GM12878 (cell line): ENCODE measurements at regions of chr6 and their contacts with region 1.

Region 1: GRCh38 chr6:21593412-21593926 is at the start of gene SOX4:
- DNase-seq: peak; percentile 88
- ATAC-seq: peak; percentile 73
- H3K4me3 ChIP-seq: peak within 1 kb of the TSS; percentile 88
- H3K27ac ChIP-seq: peak within 1 kb of the TSS; percentile 81
- H3K4me1 ChIP-seq: no peaks in the 10 kb centered on the region
- H3K27me3 ChIP-seq: no peaks in the 10 kb centered on the region
- CTCF ChIP-seq: no peak
- EP300 ChIP-seq: no peak
- POLR2A ChIP-seq: peak; percentile 99
- RAD21 ChIP-seq: 0 out of 2 replicates have a peak, but pooled peaks have one; percentile 1
- polyA plus RNA-seq, gene SOX4: 46.3 to 119 TPM

Region 2: DNA sequence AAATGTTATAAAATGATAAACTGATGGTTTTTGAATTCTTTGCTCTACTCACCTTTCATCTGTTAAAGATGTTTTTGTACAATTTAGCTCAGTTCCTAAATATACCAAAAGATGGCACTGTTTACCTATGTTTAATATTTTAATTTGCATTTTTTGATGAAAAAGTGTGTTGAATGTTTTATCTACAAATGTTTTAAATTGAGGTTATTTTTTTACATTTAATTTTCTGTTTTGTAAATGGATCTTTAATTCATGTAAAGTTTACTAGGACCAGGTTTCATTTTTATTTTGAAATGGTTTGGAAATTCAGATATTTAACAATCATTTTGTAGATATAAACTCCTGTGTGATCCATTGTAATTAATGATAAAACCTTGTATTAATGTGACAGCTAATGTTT is 1029.2 kb before region 1 on chr6:
- CTCF ChIA-PET with region 1: interaction called, 137 read pairs
- POLR2A ChIA-PET with region 1: interaction called, 6 read pairs
- RAD21 ChIA-PET with region 1: interaction called, 83 read pairs
- SMC1A ChIA-PET with region 1: interaction called, 62 read pairs
- in situ Hi-C with region 1: loop called (anchors 5 kb)
- intact Hi-C with region 1: loop called (anchors 1 kb)
- DNase-seq: no peak
- ATAC-seq: peak; percentile 39; the same call in 2 of the 3 replicates
- H3K4me3 ChIP-seq: no peak overlapping the region
- H3K27ac ChIP-seq: peak overlapping the region; percentile 61
- H3K4me1 ChIP-seq: peaks cover 5% of the 10 kb centered on the region
- H3K27me3 ChIP-seq: no peaks in the 10 kb centered on the region
- CTCF ChIP-seq: peak in 2 of 3 experiments; percentile 34 to 44; a peak in 4 of 6 replicates
- EP300 ChIP-seq: no peak
- POLR2A ChIP-seq: no peak
- RAD21 ChIP-seq: peak; percentile 36; the same call in 1 of the 2 replicates

Region 3: GRCh38 chr6:21003780-21004541 is 589.5 kb before region 1 on chr6:
- CTCF ChIA-PET with region 1: interaction called, 4 read pairs
- POLR2A ChIA-PET with region 1: interaction called, 4 read pairs
- RAD21 ChIA-PET with region 1: interaction called, 10 read pairs
- SMC1A ChIA-PET with region 1: no interaction called
- in situ Hi-C with region 1: no loop called
- intact Hi-C with region 1: loop called (anchors 5 kb)
- DNase-seq: peak; percentile 72
- ATAC-seq: peak; percentile 89
- H3K4me3 ChIP-seq: peak overlapping the region; percentile 32; the same call in 1 of the 2 replicates
- H3K27ac ChIP-seq: peak overlapping the region; percentile 83
- H3K4me1 ChIP-seq: peaks cover 20% of the 10 kb centered on the region
- H3K27me3 ChIP-seq: no peaks in the 10 kb centered on the region
- CTCF ChIP-seq: no peak
- EP300 ChIP-seq: peak in 1 of 2 experiments; percentile 72; a peak in 3 of 4 replicates
- POLR2A ChIP-seq: no peak
- RAD21 ChIP-seq: no peak

Region 4: GRCh38 chr6:21188505-21189223 is 404.8 kb before region 1 on chr6:
- CTCF ChIA-PET with region 1: no interaction called
- POLR2A ChIA-PET with region 1: interaction called, 6 read pairs
- RAD21 ChIA-PET with region 1: interaction called, 3 read pairs
- SMC1A ChIA-PET with region 1: no interaction called
- in situ Hi-C with region 1: loop called (anchors 25 kb)
- intact Hi-C with region 1: loop called (anchors 10 kb)
- DNase-seq: peak; percentile 82
- ATAC-seq: peak; percentile 77
- H3K4me3 ChIP-seq: no peak overlapping the region
- H3K27ac ChIP-seq: peak overlapping the region; percentile 77
- H3K4me1 ChIP-seq: peaks cover 19% of the 10 kb centered on the region
- H3K27me3 ChIP-seq: no peaks in the 10 kb centered on the region
- CTCF ChIP-seq: no peak
- EP300 ChIP-seq: no peak
- POLR2A ChIP-seq: no peak
- RAD21 ChIP-seq: no peak

Region 5: DNA sequence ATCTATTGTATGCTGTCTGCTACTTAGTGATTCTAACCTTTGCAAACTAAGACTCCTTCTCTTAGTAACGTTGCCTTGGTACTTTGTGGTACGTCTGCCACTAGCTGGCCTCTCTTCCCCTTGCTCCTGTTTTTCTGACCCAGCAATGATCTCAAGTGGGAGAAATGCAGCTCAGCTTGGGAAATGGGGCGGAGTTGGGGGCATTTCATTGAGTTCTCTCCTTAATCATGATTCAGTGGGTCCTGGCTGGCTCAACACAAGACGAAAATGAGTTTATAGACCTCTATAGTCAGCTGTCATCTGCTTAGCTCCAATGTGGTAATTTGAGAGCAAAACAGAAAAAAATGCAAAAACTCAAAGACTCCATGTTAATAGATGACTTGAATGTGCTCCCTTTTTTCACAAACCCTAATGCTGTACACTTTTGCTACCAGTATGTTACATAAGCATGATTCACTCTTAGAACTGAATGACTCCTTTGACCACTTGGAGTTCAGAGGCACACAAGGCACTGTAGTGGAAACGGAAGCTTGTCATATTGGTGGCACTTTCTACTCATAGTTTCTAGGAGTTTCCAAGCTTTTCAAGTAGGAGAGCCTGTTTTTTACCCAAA is 55.2 kb before region 1 on chr6:
- CTCF ChIA-PET with region 1: no interaction called
- POLR2A ChIA-PET with region 1: no interaction called
- RAD21 ChIA-PET with region 1: no interaction called
- SMC1A ChIA-PET with region 1: no interaction called
- in situ Hi-C with region 1: no loop called
- intact Hi-C with region 1: no loop called
- DNase-seq: no peak
- ATAC-seq: peak; percentile 51
- H3K4me3 ChIP-seq: no peak overlapping the region
- H3K27ac ChIP-seq: no peak overlapping the region
- H3K4me1 ChIP-seq: no peaks in the 10 kb centered on the region
- H3K27me3 ChIP-seq: no peaks in the 10 kb centered on the region
- CTCF ChIP-seq: no peak
- EP300 ChIP-seq: no peak
- POLR2A ChIP-seq: no peak
- RAD21 ChIP-seq: no peak

Region 6: GRCh38 chr6:21731411-21732031 is 138.1 kb after region 1 on chr6:
- CTCF ChIA-PET with region 1: no interaction called
- POLR2A ChIA-PET with region 1: no interaction called
- RAD21 ChIA-PET with region 1: no interaction called
- SMC1A ChIA-PET with region 1: no interaction called
- in situ Hi-C with region 1: no loop called
- intact Hi-C with region 1: loop called (anchors 5 kb)
- DNase-seq: no peak
- ATAC-seq: no peak; the same call in 2 of the 3 replicates
- H3K4me3 ChIP-seq: no peak overlapping the region
- H3K27ac ChIP-seq: no peak overlapping the region
- H3K4me1 ChIP-seq: no peaks in the 10 kb centered on the region
- H3K27me3 ChIP-seq: no peaks in the 10 kb centered on the region
- CTCF ChIP-seq: no peak
- EP300 ChIP-seq: no peak
- POLR2A ChIP-seq: no peak
- RAD21 ChIP-seq: no peak

Region 7: DNA sequence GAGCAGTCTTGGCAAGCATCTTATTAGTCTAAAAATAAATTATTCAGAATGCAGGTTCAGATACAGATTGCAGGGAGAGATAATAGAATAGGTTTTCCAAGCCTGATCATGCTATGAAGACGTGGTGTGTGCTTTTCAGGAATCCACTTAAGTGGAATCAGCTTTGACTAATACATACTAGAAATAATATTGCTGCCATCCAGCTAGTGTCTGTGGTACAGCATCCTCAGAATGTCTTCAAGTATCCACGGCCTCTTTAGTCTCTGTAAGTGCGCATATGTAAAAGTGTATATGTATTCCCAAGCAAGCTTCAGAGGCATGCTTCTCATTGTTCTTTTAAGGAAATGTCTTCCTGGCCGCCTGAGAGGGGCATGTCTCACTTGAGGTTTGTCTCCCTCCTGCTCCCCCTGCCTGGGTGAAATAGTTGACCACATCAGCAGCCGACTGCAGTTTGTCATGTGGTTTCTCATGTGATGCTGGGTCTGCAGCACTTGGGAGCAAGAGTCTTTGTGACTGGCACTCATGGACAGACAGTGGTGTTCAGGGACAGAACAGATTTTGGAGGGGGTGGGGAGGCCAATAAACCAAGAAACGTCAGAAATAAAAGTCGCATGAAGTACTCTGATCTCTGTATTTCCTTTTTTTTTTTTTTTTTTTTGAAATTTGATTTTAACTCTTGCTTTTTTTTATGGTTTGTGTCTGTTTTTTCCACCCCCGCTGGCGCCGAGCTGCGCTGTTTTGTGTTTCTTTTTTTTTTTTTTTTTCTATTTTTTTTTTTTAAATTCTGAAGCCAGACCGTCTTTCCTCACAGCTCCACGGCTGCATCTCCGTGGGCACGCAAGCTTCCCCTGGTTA is 552.6 kb after region 1 on chr6:
- CTCF ChIA-PET with region 1: no interaction called
- POLR2A ChIA-PET with region 1: interaction called, 3 read pairs
- RAD21 ChIA-PET with region 1: no interaction called
- SMC1A ChIA-PET with region 1: interaction called, 3 read pairs
- in situ Hi-C with region 1: no loop called
- intact Hi-C with region 1: loop called (anchors 5 kb)
- DNase-seq: no peak
- ATAC-seq: no peak
- H3K4me3 ChIP-seq: no peak overlapping the region
- H3K27ac ChIP-seq: no peak overlapping the region
- H3K4me1 ChIP-seq: no peaks in the 10 kb centered on the region; the same call in 1 of the 2 replicates
- H3K27me3 ChIP-seq: no peaks in the 10 kb centered on the region
- CTCF ChIP-seq: peak in 1 of 3 experiments; percentile 22; a peak in 1 of 6 replicates
- EP300 ChIP-seq: no peak
- POLR2A ChIP-seq: no peak
- RAD21 ChIP-seq: 0 out of 2 replicates have a peak, but pooled peaks have one; percentile 8